Panc1 (cell line): ENCODE measurements at regions of chr22 and their contacts with region 1.

Region 1: GRCh38 chr22:30763815-30764686 is 69.4 kb downstream of the OSBP2 start:
- DNase-seq: no peak
- ATAC-seq: peak; percentile 88
- H3K4me3 ChIP-seq: no peak overlapping the region
- H3K27ac ChIP-seq: no peak overlapping the region
- H3K4me1 ChIP-seq: no peaks in the 10 kb centered on the region
- H3K27me3 ChIP-seq: no peaks in the 10 kb centered on the region
- CTCF ChIP-seq: peak; percentile 75

Region 2: GRCh38 chr22:29617922-29618629 is 1146.0 kb before region 1 on chr22:
- CTCF ChIA-PET with region 1: no interaction called
- POLR2A ChIA-PET with region 1: no interaction called
- in situ Hi-C with region 1: no loop called
- intact Hi-C with region 1: no loop called
- DNase-seq: no peak
- ATAC-seq: no peak
- H3K4me3 ChIP-seq: no peak overlapping the region
- H3K27ac ChIP-seq: peak overlapping the region; percentile 83
- H3K4me1 ChIP-seq: peaks cover 74% of the 10 kb centered on the region
- H3K27me3 ChIP-seq: no peaks in the 10 kb centered on the region
- CTCF ChIP-seq: no peak

Region 3: GRCh38 chr22:30872053-30873041 is 108.3 kb after region 1 on chr22:
- CTCF ChIA-PET with region 1: interaction called, 11 read pairs
- POLR2A ChIA-PET with region 1: no interaction called
- in situ Hi-C with region 1: no loop called
- intact Hi-C with region 1: no loop called
- DNase-seq: no peak
- ATAC-seq: no peak
- H3K4me3 ChIP-seq: no peak overlapping the region
- H3K27ac ChIP-seq: no peak overlapping the region
- H3K4me1 ChIP-seq: no peaks in the 10 kb centered on the region
- H3K27me3 ChIP-seq: no peaks in the 10 kb centered on the region
- CTCF ChIP-seq: no peak

Region 4: GRCh38 chr22:30920407-30920806 is 156.4 kb after region 1 on chr22:
- CTCF ChIA-PET with region 1: interaction called, 4 read pairs
- POLR2A ChIA-PET with region 1: no interaction called
- in situ Hi-C with region 1: no loop called
- intact Hi-C with region 1: loop called (anchors 1 kb)
- DNase-seq: peak; percentile 12
- ATAC-seq: peak; percentile 66; the same call in 1 of the 2 replicates
- H3K4me3 ChIP-seq: no peak overlapping the region
- H3K27ac ChIP-seq: no peak overlapping the region
- H3K4me1 ChIP-seq: no peaks in the 10 kb centered on the region
- H3K27me3 ChIP-seq: no peaks in the 10 kb centered on the region
- CTCF ChIP-seq: peak; percentile 89

Region 5: GRCh38 chr22:32222991-32223390 is 1458.9 kb after region 1 on chr22:
- CTCF ChIA-PET with region 1: no interaction called
- POLR2A ChIA-PET with region 1: interaction called, 17 read pairs
- in situ Hi-C with region 1: no loop called
- intact Hi-C with region 1: no loop called
- DNase-seq: no peak
- ATAC-seq: no peak
- H3K4me3 ChIP-seq: no peak overlapping the region
- H3K27ac ChIP-seq: no peak overlapping the region
- H3K4me1 ChIP-seq: no peaks in the 10 kb centered on the region
- H3K27me3 ChIP-seq: no peaks in the 10 kb centered on the region
- CTCF ChIP-seq: no peak